MCF 10A (cell line): ENCODE measurements at regions of chr11 and their contacts with region 1.

Region 1: GRCh38 chr11:93020248-93021046 is 51.0 kb downstream of the MTNR1B start:
- DNase-seq: peak; percentile 99
- H3K4me3 Mint-ChIP-seq: peak overlapping the region; percentile 55
- H3K27ac Mint-ChIP-seq: peak overlapping the region; percentile 88
- H3K4me1 Mint-ChIP-seq: peaks cover 46% of the 10 kb centered on the region
- H3K27me3 Mint-ChIP-seq: no peaks in the 10 kb centered on the region
- CTCF ChIP-seq: no peak

Region 2: DNA sequence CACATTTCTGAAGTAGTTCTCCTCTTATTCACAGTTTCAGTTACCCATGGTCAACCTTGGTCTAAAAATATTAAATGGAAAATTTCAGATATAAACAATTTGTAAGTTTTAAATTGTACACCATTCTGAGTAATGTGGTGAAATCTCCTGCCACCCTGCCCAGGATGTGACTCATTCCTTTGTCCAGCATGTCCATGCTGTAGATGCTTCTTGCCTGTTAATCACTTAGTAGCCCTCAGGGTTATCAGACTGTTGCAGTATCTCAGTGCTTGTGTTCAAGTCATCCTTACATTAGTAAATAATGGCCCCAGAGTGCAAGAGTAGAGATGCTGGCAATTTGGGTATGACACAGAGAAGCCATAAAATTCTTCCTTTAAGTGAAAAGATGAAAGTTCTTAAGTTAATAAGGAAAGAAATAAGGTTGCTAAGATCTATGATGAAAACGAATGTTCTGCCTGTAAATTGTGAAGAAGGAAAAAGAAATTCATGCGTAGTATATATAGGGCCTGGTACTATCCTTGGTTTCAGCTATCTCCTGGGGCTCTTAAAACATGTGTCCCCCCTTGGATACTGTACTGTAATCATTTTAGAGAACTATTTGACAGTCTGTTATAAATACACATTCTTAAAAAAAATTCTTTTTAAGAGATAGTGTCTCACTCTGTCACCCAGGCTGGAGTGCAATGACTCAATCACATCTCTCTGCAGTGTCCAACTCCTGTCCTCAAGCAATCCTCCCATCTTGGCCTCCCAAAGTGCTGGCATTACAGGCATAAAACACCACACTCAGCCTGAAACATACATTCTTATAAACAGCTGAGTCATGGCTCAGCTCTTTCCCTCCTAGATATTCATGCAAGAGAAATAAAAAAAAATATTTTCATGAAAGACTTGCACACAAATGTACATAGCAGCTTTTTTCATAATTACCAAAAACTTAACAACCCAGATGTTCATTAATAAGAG is 19.7 kb before region 1 on chr11:
- CTCF ChIA-PET with region 1: interaction called, 5 read pairs
- POLR2A ChIA-PET with region 1: interaction called, 10 read pairs
- intact Hi-C with region 1: no loop called
- DNase-seq: peak; percentile 94
- H3K4me3 Mint-ChIP-seq: peak overlapping the region; percentile 38
- H3K27ac Mint-ChIP-seq: peak overlapping the region; percentile 99
- H3K4me1 Mint-ChIP-seq: peaks cover 28% of the 10 kb centered on the region
- H3K27me3 Mint-ChIP-seq: no peaks in the 10 kb centered on the region
- CTCF ChIP-seq: no peak

Region 3: DNA sequence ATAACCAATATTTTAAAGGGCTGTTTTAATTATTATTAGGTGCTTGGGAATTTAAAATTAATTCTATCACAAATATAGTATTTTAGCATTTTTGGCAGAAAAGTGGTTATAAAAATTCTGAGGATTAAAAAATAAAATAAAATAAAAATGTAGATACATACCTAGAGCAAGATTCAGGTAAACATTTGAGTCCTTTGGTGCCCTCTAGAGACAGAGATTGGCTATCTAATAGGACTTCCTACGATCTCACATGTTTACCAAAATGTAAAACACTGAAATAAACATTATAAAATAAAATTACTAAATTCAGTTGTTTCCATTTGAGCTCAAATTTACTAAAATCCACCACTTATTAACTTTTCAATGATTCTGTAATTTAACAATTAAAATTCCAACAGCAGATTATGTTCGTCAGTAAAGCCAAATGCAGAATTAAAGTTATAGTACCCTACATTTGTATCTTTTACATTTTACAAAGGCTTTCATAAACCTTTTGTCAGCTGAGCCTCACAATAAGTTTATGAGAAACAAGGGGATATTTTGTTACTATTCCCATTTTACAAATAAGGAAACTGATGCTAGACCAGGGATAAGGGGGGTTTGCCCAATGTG is 149.6 kb after region 1 on chr11:
- CTCF ChIA-PET with region 1: interaction called, 3 read pairs
- POLR2A ChIA-PET with region 1: no interaction called
- intact Hi-C with region 1: loop called (anchors 2 kb)
- DNase-seq: peak; percentile 63
- H3K4me3 Mint-ChIP-seq: no peak overlapping the region
- H3K27ac Mint-ChIP-seq: no peak overlapping the region
- H3K4me1 Mint-ChIP-seq: no peaks in the 10 kb centered on the region
- H3K27me3 Mint-ChIP-seq: no peaks in the 10 kb centered on the region
- CTCF ChIP-seq: peak; percentile 44